H1 (cell line): ENCODE measurements at regions of chr3 and their contacts with region 1.

Region 1: DNA sequence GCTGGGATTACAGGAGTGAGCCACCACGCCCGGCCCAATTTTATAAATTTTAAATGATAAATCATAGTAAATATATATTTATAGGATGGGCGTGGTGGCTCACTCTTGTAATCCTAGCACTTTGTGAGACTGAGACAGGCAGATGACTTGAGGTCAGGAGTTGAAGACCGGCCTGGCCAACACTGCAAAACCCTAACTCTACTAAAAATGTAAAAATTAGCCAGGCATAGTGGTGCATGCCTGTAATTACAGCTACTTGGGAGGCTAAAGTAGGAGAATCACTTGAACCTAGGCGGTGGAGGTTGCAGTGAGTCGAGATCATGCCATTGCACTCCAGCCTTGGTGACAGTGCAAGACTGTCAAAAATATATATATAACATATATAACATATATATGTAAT is 26.4 kb downstream of the MFN1 start:
- DNase-seq: no peak
- H3K4me3 ChIP-seq: no peak overlapping the region
- H3K27ac ChIP-seq: no peak overlapping the region
- H3K4me1 ChIP-seq: no peaks in the 10 kb centered on the region
- H3K27me3 ChIP-seq: no peaks in the 10 kb centered on the region
- CTCF ChIP-seq: no peak
- EP300 ChIP-seq: no peak
- POLR2A ChIP-seq: no peak
- RAD21 ChIP-seq: no peak

Region 2: DNA sequence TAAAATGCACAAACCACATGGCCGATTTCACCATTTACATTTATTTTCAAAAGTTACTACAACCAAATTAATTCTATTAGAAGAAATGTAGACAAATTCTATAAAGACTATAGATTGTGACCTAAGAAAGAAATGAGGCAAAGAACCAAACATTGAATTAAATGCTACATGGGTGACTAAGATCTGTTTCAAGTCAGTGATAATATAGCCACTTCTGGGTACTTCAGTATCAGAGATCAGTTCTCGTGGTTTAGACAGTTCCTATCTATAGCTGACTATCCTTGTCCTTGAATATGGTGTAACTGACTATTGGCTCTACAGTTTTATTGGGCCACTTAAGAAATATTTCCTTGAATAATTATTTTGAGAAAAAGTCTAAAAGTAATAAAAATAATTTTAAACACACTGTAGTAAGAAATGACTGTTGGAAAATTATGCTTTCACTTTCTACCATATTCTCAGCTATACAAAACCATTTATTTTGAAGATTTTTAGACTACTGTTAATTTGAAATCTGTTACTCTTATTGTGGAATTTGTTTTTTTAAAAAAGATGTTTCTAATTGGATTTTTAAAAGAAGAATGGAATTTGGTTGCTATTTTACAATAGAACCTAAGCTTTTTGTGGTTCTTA is 137.2 kb before region 1 on chr3:
- CTCF ChIA-PET with region 1: no interaction called
- POLR2A ChIA-PET with region 1: no interaction called
- DNase-seq: no peak
- H3K4me3 ChIP-seq: no peak overlapping the region
- H3K27ac ChIP-seq: no peak overlapping the region
- H3K4me1 ChIP-seq: no peaks in the 10 kb centered on the region
- H3K27me3 ChIP-seq: no peaks in the 10 kb centered on the region
- CTCF ChIP-seq: no peak
- EP300 ChIP-seq: no peak
- POLR2A ChIP-seq: no peak
- RAD21 ChIP-seq: no peak

Region 3: DNA sequence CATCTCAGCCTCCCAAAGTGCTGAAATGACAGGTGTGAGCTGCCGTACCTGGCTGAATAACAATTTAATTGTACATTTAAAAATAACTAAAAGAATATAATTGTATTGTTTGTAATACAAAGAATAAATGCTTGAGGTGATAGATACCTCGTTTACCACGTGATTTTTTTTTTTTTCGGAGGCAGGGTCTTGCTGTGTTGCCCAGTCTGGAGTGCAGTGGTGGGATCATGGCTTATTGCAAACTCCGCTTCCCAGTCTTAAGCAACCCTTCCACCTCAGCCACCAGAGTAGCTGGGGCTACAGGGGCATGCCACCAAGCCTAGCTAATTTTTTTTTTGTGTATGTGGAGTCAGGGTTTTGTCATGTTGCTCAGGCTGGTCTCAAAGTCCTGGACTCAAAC is 10.6 kb before region 1 on chr3:
- CTCF ChIA-PET with region 1: interaction called, 20 read pairs
- POLR2A ChIA-PET with region 1: no interaction called
- DNase-seq: no peak
- H3K4me3 ChIP-seq: no peak overlapping the region
- H3K27ac ChIP-seq: no peak overlapping the region
- H3K4me1 ChIP-seq: no peaks in the 10 kb centered on the region
- H3K27me3 ChIP-seq: no peaks in the 10 kb centered on the region
- CTCF ChIP-seq: no peak
- EP300 ChIP-seq: no peak
- POLR2A ChIP-seq: no peak
- RAD21 ChIP-seq: no peak

Region 4: GRCh38 chr3:179391906-179392305 is 18.0 kb after region 1 on chr3:
- CTCF ChIA-PET with region 1: interaction called, 10 read pairs
- POLR2A ChIA-PET with region 1: no interaction called
- DNase-seq: no peak
- H3K4me3 ChIP-seq: no peak overlapping the region
- H3K27ac ChIP-seq: no peak overlapping the region
- H3K4me1 ChIP-seq: no peaks in the 10 kb centered on the region
- H3K27me3 ChIP-seq: no peaks in the 10 kb centered on the region
- CTCF ChIP-seq: no peak
- EP300 ChIP-seq: no peak
- POLR2A ChIP-seq: no peak
- RAD21 ChIP-seq: no peak

Region 5: GRCh38 chr3:179410331-179410730 is 36.4 kb after region 1 on chr3:
- CTCF ChIA-PET with region 1: no interaction called
- POLR2A ChIA-PET with region 1: no interaction called
- DNase-seq: no peak
- H3K4me3 ChIP-seq: no peak overlapping the region
- H3K27ac ChIP-seq: no peak overlapping the region
- H3K4me1 ChIP-seq: 0 out of 7 replicates have a peak, but pooled peaks cover 0 to 3% (median 0%) of the 10 kb centered on the region in 4 experiments
- H3K27me3 ChIP-seq: no peaks in the 10 kb centered on the region
- CTCF ChIP-seq: no peak
- EP300 ChIP-seq: no peak
- POLR2A ChIP-seq: no peak
- RAD21 ChIP-seq: peak; percentile 35 to 43